Heart left ventricle (tissue), 16 donors: ENCODE measurements at regions of chr11 and their contacts with region 1.

Region 1: GRCh38 chr11:41461057-41461681 is 1.7 kb upstream of the LRRC4C start:
- DNase-seq: no peak
- ATAC-seq: no peak
- H3K4me3 ChIP-seq: no peak overlapping the region
- H3K27ac ChIP-seq: no peak overlapping the region
- H3K4me1 ChIP-seq: no peaks in the 10 kb centered on the region
- H3K27me3 ChIP-seq: peaks cover 0 to 41% (median 9%) of the 10 kb centered on the region in 9 donors
- CTCF ChIP-seq: peak; percentile 42 to 74 (median 60)
- POLR2A ChIP-seq: no peak

Region 2: GRCh38 chr11:41400819-41401382 is 60.3 kb before region 1 on chr11:
- intact Hi-C with region 1: loop called in 1 of 10 experiments (anchors 10 kb)
- DNase-seq: no peak
- ATAC-seq: no peak
- H3K4me3 ChIP-seq: no peak overlapping the region
- H3K27ac ChIP-seq: no peak overlapping the region
- H3K4me1 ChIP-seq: no peaks in the 10 kb centered on the region
- H3K27me3 ChIP-seq: no peaks in the 10 kb centered on the region
- CTCF ChIP-seq: no peak
- POLR2A ChIP-seq: no peak

Region 3: DNA sequence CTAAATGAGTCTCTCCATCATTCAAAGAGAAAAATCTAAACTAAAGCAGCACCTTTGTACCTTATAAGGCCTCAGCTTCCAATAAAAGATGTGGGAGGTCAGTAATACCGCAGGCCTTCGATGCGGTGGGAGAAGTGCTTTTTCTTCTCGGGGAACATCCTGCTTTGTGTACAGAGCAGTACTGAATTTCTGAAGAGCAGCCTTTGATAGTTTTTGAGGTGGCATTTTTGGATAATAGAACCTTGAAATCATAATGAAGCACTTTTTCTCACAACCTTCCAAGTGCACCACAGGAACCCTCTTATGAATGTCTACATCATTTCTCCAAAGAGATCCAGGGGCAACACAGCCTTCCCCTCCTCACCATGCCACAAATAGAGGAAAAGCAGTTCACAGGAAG is 41.3 kb before region 1 on chr11:
- intact Hi-C with region 1: no loop called
- DNase-seq: no peak
- ATAC-seq: no peak
- H3K4me3 ChIP-seq: no peak overlapping the region
- H3K27ac ChIP-seq: no peak overlapping the region
- H3K4me1 ChIP-seq: no peaks in the 10 kb centered on the region
- H3K27me3 ChIP-seq: no peaks in the 10 kb centered on the region
- CTCF ChIP-seq: no peak
- POLR2A ChIP-seq: no peak

Region 4: GRCh38 chr11:42524534-42525227 is 1063.5 kb after region 1 on chr11:
- intact Hi-C with region 1: loop called in 8 of 10 experiments (anchors 2 to 10 kb)
- DNase-seq: peak in 4 of 5 donors; percentile 23 to 28 (median 26)
- ATAC-seq: peak in 3 of 4 donors; percentile 53 to 78 (median 63)
- H3K4me3 ChIP-seq: no peak overlapping the region
- H3K27ac ChIP-seq: no peak overlapping the region
- H3K4me1 ChIP-seq: no peaks in the 10 kb centered on the region
- H3K27me3 ChIP-seq: peaks cover 0 to 4% (median 0%) of the 10 kb centered on the region in 9 donors
- CTCF ChIP-seq: peak; percentile 50 to 71 (median 64)
- POLR2A ChIP-seq: no peak

Region 5: GRCh38 chr11:43282607-43283440 is 1821.7 kb after region 1 on chr11:
- intact Hi-C with region 1: loop called in 5 of 10 experiments (anchors 5 to 10 kb)
- DNase-seq: peak in 2 of 5 donors; percentile 33 to 73
- ATAC-seq: peak in 2 of 4 donors; percentile 18 to 60
- H3K4me3 ChIP-seq: no peak overlapping the region
- H3K27ac ChIP-seq: no peak overlapping the region
- H3K4me1 ChIP-seq: no peaks in the 10 kb centered on the region
- H3K27me3 ChIP-seq: peaks cover 0 to 45% (median 4%) of the 10 kb centered on the region in 9 donors
- CTCF ChIP-seq: peak; percentile 76 to 93 (median 90)
- POLR2A ChIP-seq: no peak